Mucosa of descending colon (tissue), 3 donors: ENCODE measurements at regions of chr15 and their contacts with region 1.

Region 1: DNA sequence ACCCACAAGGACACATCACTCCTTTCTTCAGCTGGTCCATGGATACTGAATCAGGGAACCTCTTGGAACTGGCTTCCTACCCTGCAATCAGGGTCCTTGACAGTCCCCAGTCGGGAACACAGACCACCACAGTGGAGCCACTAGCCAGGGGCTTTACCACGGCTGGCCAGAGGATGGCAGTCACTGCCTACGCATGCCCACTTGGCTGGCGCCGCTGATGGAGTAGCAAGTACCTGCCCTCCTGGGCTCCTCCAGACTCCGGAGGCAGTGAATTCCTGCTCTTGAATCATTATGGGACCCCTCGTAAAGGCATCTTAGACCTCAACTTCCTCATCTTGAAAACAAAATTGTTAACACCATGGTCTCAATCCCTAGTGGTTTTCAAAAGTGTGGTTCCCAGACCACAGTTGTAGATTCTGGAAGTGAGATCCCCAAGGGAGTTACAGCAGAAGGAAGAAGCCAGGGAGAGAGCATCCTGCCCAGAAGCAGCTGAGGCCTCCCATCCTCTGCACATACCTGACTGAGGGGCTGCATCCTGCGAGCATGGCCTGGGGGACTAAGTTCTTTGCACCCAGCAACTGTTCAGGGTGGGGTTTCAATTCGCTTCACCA is 9.1 kb upstream of the SKIC8 start:
- DNase-seq: peak in 2 of 3 donors; percentile 83 to 84
- ATAC-seq: peak; percentile 91
- H3K4me3 ChIP-seq: no peak overlapping the region
- H3K4me1 ChIP-seq: peaks cover 4% of the 10 kb centered on the region
- CTCF ChIP-seq: peak; percentile 60

Region 2: GRCh38 chr15:77921664-77922063 is 386.9 kb before region 1 on chr15:
- intact Hi-C with region 1: no loop called
- DNase-seq: no peak
- ATAC-seq: no peak
- H3K4me3 ChIP-seq: no peak overlapping the region
- H3K4me1 ChIP-seq: no peaks in the 10 kb centered on the region
- CTCF ChIP-seq: no peak

Region 3: DNA sequence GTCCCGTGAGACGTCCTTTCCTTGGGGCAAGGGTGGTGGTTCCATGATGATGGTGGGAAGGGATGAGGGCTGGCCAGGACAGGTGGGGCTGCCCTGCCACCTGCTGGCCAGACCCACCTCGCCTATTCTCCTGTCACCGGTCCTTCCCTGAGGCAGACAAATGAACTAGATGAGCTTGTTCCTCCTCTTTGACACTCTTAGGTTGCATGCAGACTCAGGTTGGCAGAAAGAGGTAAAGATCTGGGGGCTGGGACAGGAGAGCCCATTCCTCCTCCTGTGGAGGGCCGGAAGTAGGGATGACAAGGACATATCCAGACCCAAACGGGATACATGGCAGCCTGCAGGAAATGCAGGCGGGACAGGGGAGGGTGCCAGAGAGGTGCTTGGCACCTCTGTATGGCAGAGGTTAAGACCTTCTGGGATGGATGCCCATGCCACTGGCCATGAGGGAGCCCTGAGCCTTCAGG is 112.8 kb before region 1 on chr15:
- intact Hi-C with region 1: no loop called
- DNase-seq: peak in 2 of 3 donors; percentile 66 to 67
- ATAC-seq: peak; percentile 92
- H3K4me3 ChIP-seq: no peak overlapping the region
- H3K4me1 ChIP-seq: no peaks in the 10 kb centered on the region
- CTCF ChIP-seq: peak; percentile 57

Region 4: DNA sequence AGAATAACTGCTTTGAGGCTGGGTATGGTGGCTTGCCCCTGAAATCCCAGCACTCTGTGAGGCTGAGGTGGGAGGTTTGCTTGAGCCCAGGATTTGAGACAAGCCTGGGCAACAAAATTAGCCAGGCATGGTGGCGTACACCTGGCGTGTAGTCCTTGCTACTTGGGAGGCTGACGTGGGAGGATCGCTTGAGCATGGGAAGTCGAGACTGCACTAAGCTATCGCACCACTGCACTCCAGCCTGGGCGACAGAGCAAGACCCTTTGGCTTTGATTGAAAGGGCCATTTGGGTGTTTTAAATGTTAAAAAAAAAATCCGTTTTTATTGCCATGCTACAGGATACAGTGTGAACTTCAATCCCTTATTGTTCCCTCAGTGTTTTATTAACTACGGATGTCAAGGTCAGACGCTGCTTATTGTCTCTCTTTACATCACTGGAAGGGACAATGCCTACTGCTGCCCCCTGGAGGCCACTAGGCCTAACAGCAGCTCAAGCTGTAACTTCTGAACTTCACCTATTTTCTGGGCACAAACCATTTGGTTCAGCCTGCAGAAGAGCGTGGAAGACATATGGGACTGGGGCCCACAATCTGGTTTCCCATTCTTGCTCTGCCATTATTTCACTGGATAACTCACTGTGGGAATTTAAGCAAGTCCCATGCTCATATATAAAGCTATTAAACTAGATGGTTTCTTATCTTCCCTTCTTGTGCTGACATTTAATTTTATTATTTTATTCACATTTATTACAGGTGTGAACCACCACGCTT is 114.2 kb after region 1 on chr15:
- intact Hi-C with region 1: loop called in 1 of 2 experiments (anchors 5 kb)
- DNase-seq: peak; percentile 69 to 82 (median 80)
- ATAC-seq: peak; percentile 98
- H3K4me3 ChIP-seq: no peak overlapping the region
- H3K4me1 ChIP-seq: peaks cover 20% of the 10 kb centered on the region
- CTCF ChIP-seq: peak; percentile 89

Region 5: DNA sequence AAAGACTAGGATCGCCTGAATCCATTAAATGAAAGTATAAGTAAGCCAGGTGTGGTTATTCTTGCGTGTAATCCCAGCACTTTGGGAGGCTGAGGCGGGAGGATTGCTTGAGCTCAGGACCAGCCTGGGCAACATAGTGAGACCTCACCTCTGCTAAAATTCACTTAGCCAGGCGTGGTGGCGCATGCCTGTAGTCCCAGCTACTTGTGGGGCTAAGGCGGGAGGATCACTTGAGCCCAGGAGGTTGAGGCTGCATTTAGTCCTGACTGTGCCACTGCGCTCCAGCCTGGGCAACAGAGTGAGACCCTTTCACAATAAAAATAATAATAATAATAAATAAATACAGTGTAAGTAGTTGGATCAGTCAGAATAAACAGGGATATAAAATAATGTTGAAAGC is 173.4 kb after region 1 on chr15:
- intact Hi-C with region 1: loop called in 1 of 2 experiments (anchors 10 kb)
- DNase-seq: no peak
- ATAC-seq: no peak
- H3K4me3 ChIP-seq: no peak overlapping the region
- H3K4me1 ChIP-seq: no peaks in the 10 kb centered on the region
- CTCF ChIP-seq: no peak

Region 6: DNA sequence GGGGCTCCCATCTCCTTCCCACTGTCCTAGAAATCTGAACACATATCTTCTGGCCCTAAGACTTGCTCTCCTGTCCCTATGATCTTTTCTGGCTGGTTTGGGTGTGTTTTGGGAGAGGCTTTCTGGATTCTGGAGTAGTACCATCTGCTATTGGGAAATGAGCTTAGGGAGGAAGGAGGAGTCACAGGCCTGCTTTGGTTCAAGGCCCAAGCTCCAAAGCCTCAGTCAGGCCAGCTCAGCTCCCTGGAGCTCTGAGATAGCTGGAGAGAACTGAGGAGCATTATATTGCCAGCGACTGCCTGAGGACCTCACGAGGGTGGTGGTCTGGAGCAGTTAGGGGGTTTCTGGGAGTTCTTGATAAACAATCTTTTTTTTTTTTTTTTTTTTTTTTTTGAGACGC is 763.4 kb after region 1 on chr15:
- intact Hi-C with region 1: no loop called
- DNase-seq: no peak
- ATAC-seq: peak; percentile 25
- H3K4me3 ChIP-seq: no peak overlapping the region
- H3K4me1 ChIP-seq: no peaks in the 10 kb centered on the region
- CTCF ChIP-seq: no peak